ENCODE measurements at regions of chr2 and their contacts with region 1.

Region 1: DNA sequence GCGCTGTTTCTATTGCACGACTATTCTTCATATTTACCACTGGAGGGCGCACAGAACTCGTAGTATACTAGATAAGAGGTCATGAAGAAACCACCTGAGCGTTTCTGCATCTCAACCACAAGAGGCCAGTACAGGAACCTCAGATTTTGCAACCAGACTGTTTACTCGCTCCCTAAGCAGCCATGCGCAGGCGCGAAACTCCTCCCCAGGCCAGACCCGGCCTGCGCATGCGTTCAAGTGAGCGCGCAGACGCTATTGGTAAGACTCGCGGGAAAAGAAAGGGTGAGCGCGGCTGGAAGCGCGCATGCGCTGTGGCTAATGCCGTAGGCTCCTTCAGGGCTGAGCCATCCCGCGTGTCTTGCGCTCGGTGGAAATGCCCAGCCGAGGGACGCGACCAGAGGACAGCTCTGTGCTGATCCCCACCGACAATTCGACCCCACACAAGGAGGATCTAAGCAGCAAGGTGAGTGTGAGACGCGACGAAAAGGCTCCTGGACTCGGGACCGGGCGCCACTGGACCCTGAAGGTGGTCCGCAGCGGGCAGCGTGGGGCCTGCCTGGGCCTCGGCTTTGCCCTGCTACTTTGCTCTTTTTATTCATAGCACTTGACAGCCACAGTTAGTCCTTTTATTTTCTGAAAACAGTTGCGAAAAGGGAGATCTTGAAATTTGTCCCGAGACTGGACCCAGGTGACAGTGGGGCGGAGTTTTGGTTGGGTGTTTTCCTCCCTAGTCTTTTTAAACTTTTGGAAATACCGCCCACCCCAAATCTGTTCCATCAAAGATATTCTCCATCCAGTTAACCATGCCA is at the start of gene ASNSD1:
- DNase-seq: peak; percentile 100
- H3K4me3 Mint-ChIP-seq: no peak within 1 kb of the TSS
- H3K27ac Mint-ChIP-seq: no peak within 1 kb of the TSS
- H3K4me1 Mint-ChIP-seq: peaks cover 42% of the 10 kb centered on the region
- H3K27me3 Mint-ChIP-seq: no peaks in the 10 kb centered on the region
- total RNA-seq, gene ASNSD1: 59.7 and 63.7 TPM in 2 replicates

Region 2: DNA sequence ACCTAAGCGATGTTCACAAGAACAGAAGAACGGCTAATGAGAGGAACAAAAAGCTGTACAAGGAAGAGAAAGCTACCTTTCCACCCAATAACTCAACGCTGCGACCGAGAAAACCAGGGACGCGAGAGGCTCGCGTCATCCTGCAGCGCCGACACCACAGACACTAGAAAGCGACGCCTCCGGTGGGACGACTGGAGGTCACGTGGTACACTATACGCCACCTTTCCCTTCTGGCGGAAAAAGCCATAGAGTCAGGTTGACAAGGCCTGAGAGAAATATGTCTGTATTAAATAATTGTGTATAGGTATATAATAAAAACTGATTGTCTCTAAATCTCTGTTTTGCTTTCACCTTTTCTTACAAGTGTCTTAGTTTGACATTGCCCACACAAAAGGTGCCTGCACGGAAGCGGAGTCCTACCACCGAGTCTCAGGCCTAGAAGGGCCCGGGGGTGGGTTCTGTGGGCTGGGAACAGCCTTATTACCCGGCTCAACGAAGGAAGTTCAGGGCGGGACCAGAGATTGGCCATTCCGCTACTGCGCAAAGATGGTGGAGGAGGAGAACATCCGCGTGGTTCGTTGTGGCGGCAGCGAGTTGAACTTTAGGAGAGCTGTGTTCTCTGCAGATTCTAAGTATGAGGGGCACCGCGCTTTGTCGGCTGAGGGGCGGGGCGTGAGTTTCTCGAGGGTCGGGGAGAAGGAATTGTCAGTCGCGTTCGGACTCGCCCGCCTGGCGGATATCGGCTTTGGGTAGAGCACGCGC is 220.2 kb before region 1 on chr2 and contains the start of gene WDR75:
- intact Hi-C with region 1: loop called (anchors 2 kb)
- DNase-seq: peak; percentile 98
- H3K4me3 Mint-ChIP-seq: no peak within 1 kb of the TSS
- H3K27ac Mint-ChIP-seq: peak within 1 kb of the TSS; percentile 99
- H3K4me1 Mint-ChIP-seq: peaks cover 13% of the 10 kb centered on the region
- H3K27me3 Mint-ChIP-seq: peaks cover 7% of the 10 kb centered on the region
- total RNA-seq, gene WDR75: 117 and 121 TPM in 2 replicates

Region 3: GRCh38 chr2:189674374-189675112 is 13.2 kb after region 1 on chr2 and contains the start of gene ANKAR:
- intact Hi-C with region 1: loop called (anchors 1 kb)
- DNase-seq: peak; percentile 94
- H3K4me3 Mint-ChIP-seq: peak within 1 kb of the TSS; percentile 86
- H3K27ac Mint-ChIP-seq: peak within 1 kb of the TSS; percentile 94
- H3K4me1 Mint-ChIP-seq: peaks cover 25% of the 10 kb centered on the region
- H3K27me3 Mint-ChIP-seq: no peaks in the 10 kb centered on the region
- total RNA-seq, gene ANKAR: 2.9 and 3.4 TPM in 2 replicates

Region 4: DNA sequence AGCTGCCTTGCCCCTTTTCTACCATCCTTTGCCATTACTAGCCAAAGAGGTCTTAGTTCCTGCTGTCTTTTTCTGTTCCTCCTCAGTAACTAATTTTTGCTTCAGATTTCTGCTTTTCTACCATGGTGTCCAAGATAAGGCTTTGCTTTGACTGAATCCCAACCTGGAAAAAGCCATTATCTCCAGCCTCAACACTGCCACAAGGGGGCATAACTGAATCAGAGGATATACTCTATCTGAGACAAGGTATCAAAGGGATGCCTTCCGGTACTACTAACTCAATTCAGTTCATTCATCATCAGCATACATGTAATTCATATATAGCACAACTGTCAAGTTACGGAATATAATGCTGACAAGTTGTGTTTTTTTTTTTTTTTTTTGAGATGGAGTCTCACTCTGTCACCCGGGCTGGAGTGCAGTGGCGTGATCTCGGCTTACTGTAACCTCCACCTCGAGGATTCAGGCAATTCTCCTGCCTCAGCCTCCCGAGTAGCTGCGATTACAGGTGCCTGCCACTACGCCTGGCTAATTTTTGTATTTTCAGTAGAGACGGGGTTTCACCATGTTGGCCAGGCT is 89.8 kb after region 1 on chr2:
- intact Hi-C with region 1: loop called (anchors 2 kb)
- DNase-seq: peak; percentile 83
- H3K4me3 Mint-ChIP-seq: no peak overlapping the region
- H3K27ac Mint-ChIP-seq: no peak overlapping the region
- H3K4me1 Mint-ChIP-seq: no peaks in the 10 kb centered on the region
- H3K27me3 Mint-ChIP-seq: no peaks in the 10 kb centered on the region

Region 5: GRCh38 chr2:189783927-189784867 is 122.8 kb after region 1 on chr2 and contains the starts of genes ORMDL1 and PMS1:
- intact Hi-C with region 1: loop called (anchors 1 kb)
- DNase-seq: peak; percentile 99
- H3K4me3 Mint-ChIP-seq: peak within 1 kb of the TSS; percentile 86
- H3K27ac Mint-ChIP-seq: peak within 1 kb of the TSS; percentile 86
- H3K4me1 Mint-ChIP-seq: peaks cover 37% of the 10 kb centered on the region
- H3K27me3 Mint-ChIP-seq: no peaks in the 10 kb centered on the region
- total RNA-seq, gene ORMDL1: 74.5 and 82.7 TPM in 2 replicates
- total RNA-seq, gene PMS1: 67.2 and 69.2 TPM in 2 replicates

Region 6: GRCh38 chr2:190319555-190320498 is 658.5 kb after region 1 on chr2 and contains the start of gene HIBCH:
- intact Hi-C with region 1: loop called (anchors 5 kb)
- DNase-seq: peak; percentile 96
- H3K4me3 Mint-ChIP-seq: peak within 1 kb of the TSS; percentile 95
- H3K27ac Mint-ChIP-seq: peak within 1 kb of the TSS; percentile 94
- H3K4me1 Mint-ChIP-seq: peaks cover 35% of the 10 kb centered on the region
- H3K27me3 Mint-ChIP-seq: peaks cover 2% of the 10 kb centered on the region
- total RNA-seq, gene HIBCH: 26.7 and 29.1 TPM in 2 replicates